ENCODE measurements at regions of chr17 and their contacts with region 1.

Region 1: DNA sequence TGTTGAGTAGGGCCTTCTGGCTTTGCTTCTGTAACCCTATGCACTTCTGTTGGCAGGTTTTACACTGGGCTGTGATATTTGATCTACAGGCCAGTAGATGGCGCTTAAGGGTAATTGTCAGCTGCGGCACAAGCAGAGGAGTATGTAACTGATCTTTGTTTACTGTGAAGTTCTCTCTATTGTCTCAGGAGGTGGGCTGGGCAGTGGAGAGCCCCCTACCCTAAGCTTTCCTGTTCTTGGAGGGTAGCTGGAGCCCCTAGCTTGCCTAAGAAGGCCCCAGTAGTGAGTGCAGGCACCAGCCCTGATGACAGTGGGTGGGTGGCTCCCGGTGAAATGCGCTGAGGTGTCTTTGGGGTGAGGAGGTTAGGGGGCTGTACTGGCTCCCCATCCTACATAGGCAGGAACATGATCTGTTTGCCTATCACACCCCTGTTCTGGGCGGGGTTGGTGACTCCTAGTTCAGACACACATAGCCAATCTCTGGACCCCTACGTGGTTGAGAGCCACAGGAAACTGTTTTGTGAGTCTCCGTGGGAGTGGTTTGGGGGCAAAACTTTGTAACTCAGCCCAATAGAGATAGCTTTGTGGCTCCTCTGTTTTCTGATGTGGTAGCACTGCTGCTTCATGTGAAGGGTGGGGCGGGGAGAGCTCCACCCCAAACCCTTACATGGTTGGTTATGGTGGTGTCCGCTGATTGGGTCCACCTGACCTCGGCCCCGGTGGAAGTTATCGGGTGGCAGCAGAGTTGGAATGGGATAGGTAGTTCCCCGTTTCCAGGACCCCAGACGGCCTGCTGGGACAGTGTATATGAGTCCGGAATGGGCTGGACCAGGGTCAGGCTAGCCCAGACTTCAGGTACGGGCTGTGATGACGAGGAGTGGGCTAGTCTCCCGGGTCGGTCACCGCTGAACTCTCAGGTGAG is 60.4 kb downstream of the SLFN11 start:
- DNase-seq: peak; percentile 66
- H3K4me3 ChIP-seq: peak overlapping the region in 1 of 2 donors; percentile 5
- H3K27ac ChIP-seq: no peak overlapping the region
- H3K4me1 ChIP-seq: peaks cover 3% of the 10 kb centered on the region
- H3K27me3 ChIP-seq: no peaks in the 10 kb centered on the region
- CTCF ChIP-seq: peak in 3 of 4 experiments; percentile 62 to 81 (median 75)
- POLR2A ChIP-seq: no peak

Region 2: GRCh38 chr17:35170968-35171771 is 141.9 kb before region 1 on chr17:
- intact Hi-C with region 1: loop called (anchors 5 kb)
- DNase-seq: no peak
- H3K4me3 ChIP-seq: no peak overlapping the region
- H3K27ac ChIP-seq: no peak overlapping the region
- H3K4me1 ChIP-seq: no peaks in the 10 kb centered on the region
- H3K27me3 ChIP-seq: no peaks in the 10 kb centered on the region
- CTCF ChIP-seq: peak in 2 of 4 experiments; percentile 49 to 55
- POLR2A ChIP-seq: no peak

Region 3: GRCh38 chr17:35273684-35274083 is 39.4 kb before region 1 on chr17:
- intact Hi-C with region 1: no loop called
- DNase-seq: no peak
- H3K4me3 ChIP-seq: no peak overlapping the region
- H3K27ac ChIP-seq: no peak overlapping the region
- H3K4me1 ChIP-seq: no peaks in the 10 kb centered on the region
- H3K27me3 ChIP-seq: no peaks in the 10 kb centered on the region
- CTCF ChIP-seq: no peak
- POLR2A ChIP-seq: no peak

Region 4: GRCh38 chr17:35537601-35538141 is 224.6 kb after region 1 on chr17 and contains the start of gene SLFN12L:
- intact Hi-C with region 1: loop called (anchors 2 kb)
- DNase-seq: no peak
- H3K4me3 ChIP-seq: no peak within 1 kb of the TSS
- H3K27ac ChIP-seq: no peak within 1 kb of the TSS
- H3K4me1 ChIP-seq: no peaks in the 10 kb centered on the region
- H3K27me3 ChIP-seq: no peaks in the 10 kb centered on the region
- CTCF ChIP-seq: no peak
- POLR2A ChIP-seq: no peak
- total RNA-seq, gene SLFN12L: 0.23 to 1.2 TPM